HepG2 (cell line): ENCODE measurements at regions of chr22 and their contacts with region 1.

Region 1: GRCh38 chr22:29780748-29781676 is 13.8 kb downstream of the UQCR10 start:
- DNase-seq: peak; percentile 56
- ATAC-seq: peak; percentile 48
- H3K4me3 ChIP-seq: peak overlapping the region in 2 of 3 experiments; percentile 27 to 48; a peak in 3 of 6 replicates
- H3K27ac ChIP-seq: no peak overlapping the region
- H3K4me1 ChIP-seq: peaks cover 83% of the 10 kb centered on the region
- H3K27me3 ChIP-seq: no peaks in the 10 kb centered on the region
- CTCF ChIP-seq: no peak
- EP300 ChIP-seq: no peak
- POLR2A ChIP-seq: no peak
- RAD21 ChIP-seq: no peak

Region 2: DNA sequence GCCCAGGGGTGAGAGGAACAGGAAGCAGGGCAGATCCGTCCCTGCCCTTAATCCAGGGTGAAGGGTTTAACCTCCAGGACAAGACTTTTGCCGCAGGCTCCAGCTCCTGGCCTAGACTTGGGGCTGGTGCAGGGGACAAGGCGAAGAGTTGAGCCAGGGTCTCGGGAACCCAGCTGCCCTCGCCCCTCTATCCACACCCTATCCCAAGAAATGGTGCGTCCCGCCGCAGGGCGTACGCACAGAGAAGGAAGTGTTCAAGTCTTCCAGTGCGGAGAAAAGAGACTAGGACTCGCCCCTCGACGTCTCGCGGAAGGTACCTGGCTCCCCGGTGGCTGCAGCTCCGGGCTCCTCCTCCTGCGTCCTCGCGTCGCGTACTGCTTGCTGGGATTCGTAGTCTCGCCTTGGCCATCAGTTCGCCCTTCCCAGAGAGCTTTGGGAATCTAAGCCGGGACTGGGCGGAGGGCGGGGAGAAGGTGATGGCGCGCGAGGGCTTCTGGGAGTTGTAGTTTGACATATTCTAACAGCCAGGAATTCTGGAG is 14.3 kb before region 1 on chr22 and contains the start of gene ZMAT5:
- CTCF ChIA-PET with region 1: no interaction called
- POLR2A ChIA-PET with region 1: interaction called, 31 read pairs
- in situ Hi-C with region 1: no loop called
- intact Hi-C with region 1: loop called (anchors 1 kb)
- DNase-seq: peak; percentile 96
- ATAC-seq: peak; percentile 94
- H3K4me3 ChIP-seq: peak within 1 kb of the TSS; percentile 95
- H3K27ac ChIP-seq: peak within 1 kb of the TSS; percentile 88
- H3K4me1 ChIP-seq: peaks cover 57% of the 10 kb centered on the region
- H3K27me3 ChIP-seq: peaks cover 0 to 4% of the 10 kb centered on the region in 2 experiments; a peak in 1 of 5 replicates
- CTCF ChIP-seq: no peak
- EP300 ChIP-seq: 0 out of 4 replicates have a peak, but pooled peaks of 1 of the 2 experiments have one; percentile 2
- POLR2A ChIP-seq: peak; percentile 74 to 91
- RAD21 ChIP-seq: no peak
- total RNA-seq, gene ZMAT5: 27.8 and 34.7 TPM in 2 replicates

Region 3: GRCh38 chr22:29798801-29799680 is 18.0 kb after region 1 on chr22:
- CTCF ChIA-PET with region 1: no interaction called
- POLR2A ChIA-PET with region 1: interaction called, 17 read pairs
- in situ Hi-C with region 1: no loop called
- intact Hi-C with region 1: no loop called
- DNase-seq: peak; percentile 90
- ATAC-seq: peak; percentile 96
- H3K4me3 ChIP-seq: peak overlapping the region in 1 of 3 experiments; percentile 42; a peak in 1 of 6 replicates
- H3K27ac ChIP-seq: peak overlapping the region; percentile 74
- H3K4me1 ChIP-seq: peaks cover 40% of the 10 kb centered on the region
- H3K27me3 ChIP-seq: no peaks in the 10 kb centered on the region
- CTCF ChIP-seq: 0 out of 2 replicates have a peak, but pooled peaks have one; percentile 26
- EP300 ChIP-seq: peak; percentile 22 to 68; a peak in 2 of 4 replicates
- POLR2A ChIP-seq: peak in 1 of 2 experiments; percentile 37; a peak in 1 of 4 replicates
- RAD21 ChIP-seq: no peak

Region 4: GRCh38 chr22:29830585-29830984 is 49.6 kb after region 1 on chr22:
- CTCF ChIA-PET with region 1: no interaction called
- POLR2A ChIA-PET with region 1: no interaction called
- in situ Hi-C with region 1: no loop called
- intact Hi-C with region 1: no loop called
- DNase-seq: no peak
- ATAC-seq: no peak
- H3K4me3 ChIP-seq: no peak overlapping the region
- H3K27ac ChIP-seq: no peak overlapping the region
- H3K4me1 ChIP-seq: peaks cover 2% of the 10 kb centered on the region
- H3K27me3 ChIP-seq: no peaks in the 10 kb centered on the region
- CTCF ChIP-seq: no peak
- EP300 ChIP-seq: no peak
- POLR2A ChIP-seq: no peak
- RAD21 ChIP-seq: no peak